ENCODE measurements at regions of chr19 and their contacts with region 1.

Region 1: GRCh38 chr19:12092065-12092867 is 27.7 kb downstream of the ZNF844 start:
- DNase-seq: peak; percentile 86
- H3K4me3 Mint-ChIP-seq: peak overlapping the region; percentile 83
- H3K27ac Mint-ChIP-seq: peak overlapping the region; percentile 73
- H3K4me1 Mint-ChIP-seq: peaks cover 6% of the 10 kb centered on the region
- H3K27me3 Mint-ChIP-seq: peaks cover 14% of the 10 kb centered on the region

Region 2: DNA sequence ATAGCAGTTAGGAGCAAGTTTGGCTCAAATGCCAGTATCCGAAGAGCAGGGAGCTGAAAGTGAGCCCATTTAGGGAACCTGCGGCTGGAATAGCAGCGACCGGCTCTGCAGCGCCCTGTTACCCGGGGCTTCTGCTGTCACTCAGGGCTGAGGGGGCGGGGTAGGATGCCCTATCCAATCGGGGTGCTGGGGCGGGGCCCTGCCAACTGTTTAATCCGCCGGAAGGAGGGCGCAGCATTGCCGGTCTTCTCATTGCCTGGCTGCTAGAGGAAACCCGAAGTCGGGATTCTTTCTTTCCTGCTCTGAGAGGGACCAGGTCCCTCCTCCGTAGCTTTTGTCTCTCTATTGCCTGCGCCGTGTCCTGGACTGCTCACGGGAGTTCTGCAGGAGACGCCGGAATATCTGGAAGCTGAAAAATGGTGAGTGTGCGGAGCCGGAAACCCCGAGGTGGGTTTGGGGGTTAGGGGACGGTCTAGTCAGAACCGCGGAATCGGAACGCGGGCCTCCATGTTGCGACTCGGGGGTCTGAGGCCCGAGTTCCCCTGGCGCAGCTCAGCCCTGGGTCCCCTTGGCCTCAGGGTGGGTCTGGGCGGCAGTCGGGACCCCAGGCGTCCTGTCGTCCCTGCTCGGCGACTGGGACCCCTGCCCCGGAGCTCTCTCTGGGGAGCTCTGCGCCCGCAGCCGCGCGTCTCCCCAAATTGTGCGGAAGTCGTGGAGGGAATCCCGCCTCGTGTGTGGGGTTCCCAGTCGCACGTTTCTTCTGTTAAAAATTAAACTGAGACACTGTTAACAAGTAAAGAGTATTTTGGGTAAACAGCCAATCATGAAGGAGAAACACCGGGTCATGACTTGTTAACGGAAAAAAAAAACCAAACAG is 104.6 kb before region 1 on chr19:
- CTCF ChIA-PET with region 1: no interaction called
- intact Hi-C with region 1: no loop called
- DNase-seq: peak; percentile 97
- H3K4me3 Mint-ChIP-seq: peak overlapping the region; percentile 92
- H3K27ac Mint-ChIP-seq: peak overlapping the region; percentile 92
- H3K4me1 Mint-ChIP-seq: peaks cover 22% of the 10 kb centered on the region
- H3K27me3 Mint-ChIP-seq: no peaks in the 10 kb centered on the region

Region 3: GRCh38 chr19:12126707-12127106 is 34.4 kb after region 1 on chr19:
- CTCF ChIA-PET with region 1: interaction called, 13 read pairs
- intact Hi-C with region 1: no loop called
- DNase-seq: peak; percentile 23
- H3K4me3 Mint-ChIP-seq: no peak overlapping the region
- H3K27ac Mint-ChIP-seq: no peak overlapping the region
- H3K4me1 Mint-ChIP-seq: no peaks in the 10 kb centered on the region
- H3K27me3 Mint-ChIP-seq: no peaks in the 10 kb centered on the region

Region 4: GRCh38 chr19:12139885-12140547 is 47.8 kb after region 1 on chr19 and contains the start of gene ZNF20:
- CTCF ChIA-PET with region 1: interaction called, 42 read pairs
- intact Hi-C with region 1: loop called (anchors 1 kb)
- DNase-seq: peak; percentile 95
- H3K4me3 Mint-ChIP-seq: peak within 1 kb of the TSS; percentile 92
- H3K27ac Mint-ChIP-seq: peak within 1 kb of the TSS; percentile 65
- H3K4me1 Mint-ChIP-seq: peaks cover 32% of the 10 kb centered on the region
- H3K27me3 Mint-ChIP-seq: no peaks in the 10 kb centered on the region
- total RNA-seq, gene ZNF20: 2.1 to 3.1 TPM

Measured in activated naive CD4-positive, alpha-beta T cell treated with anti-CD3 and anti-CD28 coated beads for 36 hours (primary cell).